ENCODE measurements at regions of chr15 and their contacts with region 1.

Region 1: GRCh38 chr15:86044981-86045380 is 34.7 kb upstream of the AGBL1 start:
- DNase-seq: no peak
- H3K4me3 ChIP-seq: no peak overlapping the region
- H3K27ac ChIP-seq: no peak overlapping the region
- H3K4me1 ChIP-seq: no peaks in the 10 kb centered on the region
- H3K27me3 ChIP-seq: peaks cover 30% of the 10 kb centered on the region
- CTCF ChIP-seq: no peak
- EP300 ChIP-seq: no peak
- POLR2A ChIP-seq: no peak

Region 2: DNA sequence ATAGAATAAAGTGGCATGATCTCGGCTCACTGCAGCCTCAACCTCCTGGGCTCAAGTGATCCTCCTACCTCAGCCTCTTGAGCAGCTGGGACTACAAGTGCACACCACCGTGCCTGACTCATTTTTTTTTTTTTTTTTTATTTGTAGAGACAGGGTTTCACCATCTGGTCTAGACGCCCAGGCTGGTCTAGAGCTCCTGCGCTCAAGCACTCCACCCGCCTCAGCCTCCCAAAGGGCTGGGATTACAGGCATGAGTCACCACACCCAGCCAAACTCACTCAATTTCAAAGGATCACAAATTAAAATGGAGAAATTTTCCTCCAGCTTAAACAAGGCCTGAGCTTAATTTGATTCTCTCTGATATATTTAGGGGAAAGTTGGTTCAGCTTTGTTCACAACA is 1359.7 kb before region 1 on chr15:
- in situ Hi-C with region 1: no loop called
- intact Hi-C with region 1: no loop called
- DNase-seq: peak; percentile 13
- H3K4me3 ChIP-seq: no peak overlapping the region
- H3K27ac ChIP-seq: no peak overlapping the region
- H3K4me1 ChIP-seq: no peaks in the 10 kb centered on the region
- H3K27me3 ChIP-seq: no peaks in the 10 kb centered on the region
- CTCF ChIP-seq: no peak
- EP300 ChIP-seq: no peak
- POLR2A ChIP-seq: no peak

Region 3: DNA sequence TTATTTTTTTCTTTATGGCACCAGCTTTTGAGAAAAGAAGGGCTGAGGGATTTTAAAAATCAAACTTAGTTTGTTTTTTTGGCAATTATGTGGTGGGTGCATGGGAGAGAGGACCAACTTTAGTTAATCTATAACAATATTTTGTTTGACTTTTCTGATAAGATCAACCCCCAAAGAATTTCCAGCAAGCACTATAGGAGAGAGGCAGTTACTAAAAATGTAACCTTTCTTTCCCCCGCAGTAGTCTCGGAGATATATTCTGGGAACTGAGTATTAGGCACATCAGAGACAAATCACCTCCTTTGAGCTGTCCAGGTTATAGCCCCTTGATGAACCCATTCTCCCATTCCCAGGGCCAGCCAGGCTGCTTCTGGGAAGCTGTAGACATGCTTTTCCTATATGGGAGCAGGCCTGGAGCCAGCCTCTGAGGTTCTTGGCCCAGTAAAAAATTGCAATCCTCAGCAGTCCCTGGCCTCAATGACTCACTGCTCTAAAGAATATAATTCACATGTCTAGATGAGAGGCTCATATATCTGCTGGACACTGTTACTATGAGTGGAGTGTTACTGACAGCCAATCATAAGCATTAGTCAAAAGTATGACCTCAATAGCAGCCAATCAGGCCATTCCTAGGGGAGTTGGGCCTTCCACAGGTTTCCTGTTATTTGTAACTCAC is 103.7 kb before region 1 on chr15:
- in situ Hi-C with region 1: loop called in 1 of 4 experiments (anchors 25 kb)
- intact Hi-C with region 1: no loop called
- DNase-seq: no peak
- H3K4me3 ChIP-seq: no peak overlapping the region
- H3K27ac ChIP-seq: no peak overlapping the region
- H3K4me1 ChIP-seq: no peaks in the 10 kb centered on the region
- H3K27me3 ChIP-seq: no peaks in the 10 kb centered on the region
- CTCF ChIP-seq: no peak
- EP300 ChIP-seq: no peak
- POLR2A ChIP-seq: no peak

Region 4: GRCh38 chr15:86355801-86356200 is 310.8 kb after region 1 on chr15:
- in situ Hi-C with region 1: no loop called
- intact Hi-C with region 1: no loop called
- DNase-seq: no peak
- H3K4me3 ChIP-seq: no peak overlapping the region
- H3K27ac ChIP-seq: no peak overlapping the region
- H3K4me1 ChIP-seq: no peaks in the 10 kb centered on the region
- H3K27me3 ChIP-seq: no peaks in the 10 kb centered on the region
- CTCF ChIP-seq: no peak
- EP300 ChIP-seq: no peak
- POLR2A ChIP-seq: no peak